ENCODE measurements at regions of chr20 and their contacts with region 1.

Region 1: DNA sequence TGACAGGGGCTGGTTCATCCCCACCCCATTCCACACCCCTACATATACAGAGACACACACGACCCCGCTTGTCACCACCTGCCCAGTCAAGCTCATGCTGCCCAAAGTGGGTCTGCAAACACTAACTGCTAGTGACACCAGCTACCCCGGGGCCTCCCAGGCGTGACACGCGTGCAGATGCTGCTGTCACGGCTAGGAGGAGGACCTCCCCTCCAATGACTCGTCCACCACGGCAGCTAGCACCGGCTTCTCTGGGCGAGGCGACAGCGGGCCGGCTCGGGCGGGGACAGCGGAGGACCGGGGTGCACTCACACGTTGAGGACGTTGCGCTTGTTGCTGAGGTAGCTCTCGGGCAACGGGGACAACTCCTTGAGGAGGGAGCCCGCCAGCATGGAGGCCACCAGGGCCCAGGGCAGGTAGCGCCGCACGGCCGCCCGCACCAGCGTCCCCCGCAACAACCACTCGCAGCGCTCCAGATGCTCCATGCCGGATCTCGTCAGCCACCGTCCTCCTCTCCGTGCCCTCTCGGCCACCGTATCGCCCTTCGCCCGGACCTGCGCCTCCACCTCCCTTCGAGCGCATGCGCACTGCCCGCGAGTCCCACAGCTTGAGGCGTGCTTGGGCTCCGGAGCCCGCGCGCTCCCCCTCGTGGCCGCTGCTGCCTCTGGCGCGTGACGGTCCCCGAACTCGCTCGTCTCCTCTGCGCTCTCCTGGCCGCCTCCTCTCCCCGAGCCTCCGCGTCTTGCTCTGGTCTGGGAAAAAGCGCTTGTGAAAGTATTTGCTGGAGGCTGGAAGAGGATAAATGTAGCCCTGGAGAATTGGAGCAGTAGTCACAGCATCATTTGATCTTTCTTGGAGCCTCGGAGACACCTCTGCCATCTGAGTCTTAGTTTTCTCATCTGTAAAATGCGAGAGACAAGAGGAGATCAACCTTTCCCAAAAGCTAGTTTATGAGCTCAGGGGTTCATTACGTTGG is at the start of gene FITM2:
- DNase-seq: peak; percentile 100
- CTCF ChIP-seq: peak; percentile 98

Region 2: GRCh38 chr20:44166477-44166876 is 144.5 kb before region 1 on chr20:
- CTCF ChIA-PET with region 1: no interaction called
- POLR2A ChIA-PET with region 1: no interaction called
- DNase-seq: no peak
- CTCF ChIP-seq: no peak

Region 3: DNA sequence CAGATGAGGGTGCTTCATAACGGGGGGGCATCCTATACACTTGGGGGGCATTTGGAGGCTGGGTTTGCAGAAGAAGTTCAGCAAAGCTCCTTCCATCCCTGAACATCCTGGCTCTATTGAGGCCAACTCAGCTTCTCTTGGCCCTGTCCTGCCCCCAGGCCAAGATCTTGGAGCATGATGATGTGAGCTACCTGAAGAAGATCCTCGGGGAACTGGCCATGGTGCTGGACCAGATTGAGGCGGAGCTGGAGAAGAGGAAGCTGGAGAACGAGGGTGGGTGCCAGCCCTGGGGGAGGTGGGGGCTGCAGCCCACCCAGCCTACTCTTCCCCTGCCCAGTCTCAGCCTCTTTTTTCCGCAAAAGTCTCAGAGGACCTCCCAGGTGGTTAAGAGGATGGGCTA is 46.7 kb before region 1 on chr20:
- CTCF ChIA-PET with region 1: interaction called, 12 read pairs
- POLR2A ChIA-PET with region 1: no interaction called
- DNase-seq: no peak
- CTCF ChIP-seq: no peak

Region 4: DNA sequence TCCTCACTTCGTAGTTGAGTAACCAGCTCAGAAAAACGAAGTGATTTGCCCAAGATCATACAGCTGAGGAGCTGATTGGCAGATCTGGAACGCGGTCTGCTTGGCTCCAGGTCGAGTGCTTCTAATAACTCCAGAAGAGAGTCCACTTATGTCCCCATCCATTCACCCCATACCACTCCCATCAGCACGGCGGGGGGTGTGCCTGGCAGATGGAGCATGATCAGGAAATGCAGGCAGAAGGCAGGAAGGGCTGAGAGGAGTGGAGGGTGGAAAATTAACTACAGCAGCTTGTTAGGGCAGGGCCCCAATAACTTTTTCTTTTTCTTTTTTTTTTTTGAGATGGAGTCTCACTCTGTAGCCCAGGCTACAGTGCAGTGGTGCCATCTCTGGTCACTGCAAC is 14.9 kb before region 1 on chr20:
- CTCF ChIA-PET with region 1: interaction called, 23 read pairs
- POLR2A ChIA-PET with region 1: no interaction called
- DNase-seq: no peak
- CTCF ChIP-seq: no peak

Region 5: DNA sequence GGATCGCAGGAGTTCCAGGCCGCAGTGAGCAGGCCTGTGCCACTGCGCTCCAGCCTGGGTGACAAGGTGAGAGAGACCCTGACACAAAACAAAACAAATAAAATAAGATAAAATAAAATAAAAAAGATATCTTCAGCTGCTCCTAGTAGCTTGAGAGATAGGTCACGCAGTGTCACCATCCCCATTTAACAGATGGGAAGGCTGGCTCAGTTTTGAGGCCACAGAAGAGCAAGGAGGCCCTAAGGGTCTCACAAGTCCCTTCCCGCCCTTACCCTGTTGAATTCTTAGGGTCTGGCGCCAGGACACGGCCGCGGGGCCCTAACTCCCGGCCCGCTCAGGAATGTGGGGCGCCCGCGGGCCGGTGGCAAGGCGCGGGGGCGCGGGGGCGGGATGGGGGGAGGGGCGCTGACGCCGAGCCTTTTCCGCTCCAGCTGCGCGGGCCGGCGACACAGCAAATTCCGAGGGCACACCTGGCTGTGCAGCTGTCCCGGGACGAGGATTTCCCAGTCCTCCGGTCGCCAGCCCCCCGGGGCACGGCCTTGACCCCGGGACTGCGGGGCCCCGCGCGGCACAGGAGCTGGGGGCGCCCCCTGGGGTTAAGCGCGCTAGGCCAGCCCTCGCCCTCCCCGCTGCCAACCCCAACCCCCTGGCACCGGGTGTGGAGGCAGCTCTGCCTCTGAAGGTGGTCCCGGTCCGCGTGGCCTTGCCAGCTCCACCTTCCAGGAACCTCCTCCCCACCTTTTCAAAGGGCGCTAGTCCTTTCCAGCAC is 15.6 kb after region 1 on chr20:
- CTCF ChIA-PET with region 1: interaction called, 115 read pairs
- POLR2A ChIA-PET with region 1: no interaction called
- DNase-seq: no peak
- CTCF ChIP-seq: no peak

Region 6: DNA sequence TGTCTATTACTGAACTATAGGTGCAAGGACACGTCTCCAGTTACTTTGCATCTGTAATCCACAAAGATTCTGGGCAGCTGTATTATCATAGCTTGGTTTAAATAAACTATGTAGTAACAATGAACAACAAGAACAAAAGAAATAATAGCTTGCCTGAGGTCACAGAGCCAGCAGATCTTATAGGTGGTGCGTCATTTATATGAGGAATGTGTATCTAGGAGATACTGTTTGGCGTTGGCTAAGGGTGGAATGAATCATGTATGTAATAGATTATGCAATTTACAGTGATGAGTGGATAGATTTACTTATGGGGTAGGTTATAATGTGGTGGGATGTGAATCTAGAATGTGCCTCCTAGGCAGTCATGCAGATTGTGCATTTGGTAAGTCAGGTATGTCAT is 87.4 kb after region 1 on chr20:
- CTCF ChIA-PET with region 1: no interaction called
- POLR2A ChIA-PET with region 1: no interaction called
- DNase-seq: no peak
- CTCF ChIP-seq: no peak

Region 7: DNA sequence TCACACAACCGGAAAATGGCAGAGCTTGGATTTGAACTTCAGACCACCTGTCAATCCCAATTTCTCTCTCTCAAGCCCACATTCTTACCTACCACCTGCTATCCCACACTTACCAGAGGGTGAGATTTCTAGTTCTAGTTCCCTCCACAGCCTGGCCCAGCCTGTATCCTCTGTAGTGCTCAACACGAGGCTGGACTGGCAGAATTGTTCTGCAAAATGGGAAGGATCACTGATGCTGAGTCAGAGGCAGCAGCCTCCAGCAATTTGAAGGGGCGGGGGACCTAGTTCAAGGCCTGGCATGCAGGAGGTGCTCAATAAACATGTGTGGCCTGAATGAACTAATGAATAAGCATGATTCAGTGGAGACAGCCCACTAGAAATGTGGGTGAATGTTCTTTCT is 111.1 kb after region 1 on chr20:
- CTCF ChIA-PET with region 1: no interaction called
- POLR2A ChIA-PET with region 1: no interaction called
- DNase-seq: no peak
- CTCF ChIP-seq: no peak